ENCODE measurements at regions of chr15 and their contacts with region 1.

Region 1: DNA sequence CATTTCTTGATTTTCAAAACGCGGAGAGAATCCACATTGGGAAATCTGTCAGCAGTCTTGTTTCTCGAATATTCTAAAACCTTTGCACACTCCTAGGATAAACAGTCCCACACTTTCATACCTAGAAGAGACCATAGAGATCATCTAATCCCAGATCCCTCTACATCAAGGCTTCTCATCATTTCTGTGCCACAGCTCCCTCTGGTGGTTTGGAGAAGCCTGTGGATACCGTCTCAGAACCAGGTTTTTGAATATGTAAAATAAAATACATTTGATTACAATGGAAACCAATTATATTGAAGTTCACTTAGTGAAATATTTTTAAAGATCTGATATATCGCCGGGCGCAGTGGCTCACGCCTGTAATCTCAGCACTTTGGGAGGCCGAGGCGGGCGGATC is 211.9 kb upstream of the GOLGA6L4 start:
- DNase-seq: peak in 1 of 2 donors; percentile 24
- ATAC-seq: peak in 1 of 8 donors; percentile 52
- H3K4me3 ChIP-seq: no peak overlapping the region
- H3K27ac ChIP-seq: no peak overlapping the region
- H3K4me1 ChIP-seq: no peaks in the 10 kb centered on the region
- H3K27me3 ChIP-seq: no peaks in the 10 kb centered on the region
- CTCF ChIP-seq: peak; percentile 34 to 69 (median 61)

Region 2: GRCh38 chr15:83734487-83734886 is 289.1 kb before region 1 on chr15:
- intact Hi-C with region 1: loop called in 2 of 10 experiments (anchors 10 kb)
- DNase-seq: no peak
- ATAC-seq: peak in 1 of 8 donors; percentile 62
- H3K4me3 ChIP-seq: no peak overlapping the region
- H3K27ac ChIP-seq: no peak overlapping the region
- H3K4me1 ChIP-seq: peaks cover 0 to 3% (median 0%) of the 10 kb centered on the region in 9 donors
- H3K27me3 ChIP-seq: no peaks in the 10 kb centered on the region
- CTCF ChIP-seq: peak in 6 of 9 donors; percentile 29 to 55 (median 40)

Region 3: GRCh38 chr15:83784975-83785374 is 238.7 kb before region 1 on chr15:
- intact Hi-C with region 1: no loop called
- DNase-seq: no peak
- ATAC-seq: no peak
- H3K4me3 ChIP-seq: no peak overlapping the region
- H3K27ac ChIP-seq: no peak overlapping the region
- H3K4me1 ChIP-seq: peaks cover 0 to 12% (median 0%) of the 10 kb centered on the region in 9 donors
- H3K27me3 ChIP-seq: no peaks in the 10 kb centered on the region
- CTCF ChIP-seq: no peak